Ascending aorta (tissue), 2 donors: ENCODE measurements at regions of chr3 and their contacts with region 1.

Region 1: DNA sequence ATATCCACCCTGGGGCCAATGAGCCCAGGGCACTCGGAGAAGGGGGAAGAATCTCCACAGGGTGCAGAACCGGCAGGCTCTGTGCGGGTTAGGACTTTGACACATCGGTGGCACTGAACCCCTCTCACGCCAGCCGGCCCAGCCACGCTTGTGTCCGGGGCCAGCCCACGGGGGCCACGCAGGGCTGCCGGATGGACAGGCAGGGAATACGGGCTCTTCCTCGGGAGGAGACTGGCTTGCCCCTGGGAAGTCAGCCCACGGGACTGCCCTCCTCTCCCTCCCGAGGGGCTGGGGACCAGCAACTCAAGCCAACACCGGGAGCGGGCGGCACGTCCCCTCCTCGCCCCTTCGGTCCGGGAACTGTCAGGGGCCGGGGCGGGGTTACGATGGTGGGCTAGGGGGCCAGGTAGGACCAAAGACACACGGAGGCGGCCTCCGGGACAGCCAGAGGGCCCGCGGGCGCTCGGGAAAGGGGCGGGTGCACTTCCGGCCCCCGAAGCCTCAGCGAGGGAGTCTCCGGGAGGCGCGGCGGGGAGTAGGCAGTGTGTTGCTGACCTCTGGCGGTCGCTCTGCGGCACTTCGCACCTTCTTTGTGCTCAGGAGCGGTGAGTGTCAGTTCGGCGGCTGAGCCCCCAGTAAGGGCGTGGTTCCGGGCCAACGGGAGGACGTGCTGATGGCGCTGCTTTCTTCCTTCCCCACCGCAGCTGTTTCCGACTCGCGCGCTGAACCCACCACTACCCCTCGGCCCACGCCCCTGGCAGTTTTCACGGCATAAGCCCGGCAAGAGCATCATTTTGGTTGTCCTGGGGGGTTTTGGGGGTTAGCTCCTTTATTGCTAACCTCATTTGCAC is 5.1 kb upstream of the CYP8B1 start:
- DNase-seq: peak; percentile 25 to 92
- H3K4me3 ChIP-seq: peak overlapping the region; percentile 69 to 70
- H3K27ac ChIP-seq: peak overlapping the region; percentile 64 to 75
- H3K4me1 ChIP-seq: peaks cover 0 to 4% of the 10 kb centered on the region in 2 donors
- H3K27me3 ChIP-seq: no peaks in the 10 kb centered on the region
- CTCF ChIP-seq: peak; percentile 88 to 97 (median 95)

Region 2: DNA sequence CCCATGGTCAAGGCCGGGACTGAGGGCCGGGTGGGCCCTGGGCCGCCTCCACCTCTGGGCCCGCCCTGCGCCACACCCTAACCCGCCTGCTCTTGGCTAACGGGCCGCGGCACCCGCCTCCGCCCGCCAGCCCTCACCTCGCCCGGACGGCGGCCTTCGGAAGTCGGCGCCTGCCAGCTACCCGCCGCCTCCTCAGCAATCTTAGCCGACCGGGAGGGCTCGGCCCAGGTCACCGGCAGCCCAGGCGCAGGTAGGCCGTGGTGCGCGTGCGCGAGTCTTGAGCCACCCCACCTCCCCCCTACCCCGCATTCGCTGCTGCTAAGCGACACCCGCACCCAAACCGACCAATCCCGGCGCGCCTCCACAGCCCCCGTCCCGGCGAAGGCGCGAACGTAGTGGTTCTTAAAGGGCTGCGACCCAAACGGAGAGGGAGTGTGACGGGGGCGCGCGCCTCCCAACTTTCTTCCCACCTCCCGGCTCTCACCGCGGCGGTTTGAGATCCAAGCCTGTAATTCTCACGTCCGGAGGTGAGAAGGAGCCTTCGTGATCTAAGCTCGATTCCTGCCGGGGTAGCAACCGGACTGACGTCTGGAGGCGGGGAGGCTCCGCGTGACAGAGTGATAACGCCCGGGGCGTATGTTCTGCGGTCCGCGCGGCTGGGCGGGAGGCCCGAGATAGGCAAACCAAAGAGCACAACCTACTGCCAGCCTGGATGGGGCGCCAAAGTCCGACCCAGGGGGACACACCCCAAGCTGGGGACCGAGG is 298.9 kb before region 1 on chr3 and contains the start of gene SEC22C:
- intact Hi-C with region 1: loop called (anchors 10 kb)
- DNase-seq: peak; percentile 84 to 98
- H3K4me3 ChIP-seq: peak within 1 kb of the TSS; percentile 86 to 96
- H3K27ac ChIP-seq: peak within 1 kb of the TSS; percentile 84 to 90
- H3K4me1 ChIP-seq: peaks cover 0 to 16% of the 10 kb centered on the region in 2 donors
- H3K27me3 ChIP-seq: no peaks in the 10 kb centered on the region
- CTCF ChIP-seq: peak in 2 of 3 experiments; percentile 16 to 49
- total RNA-seq, gene SEC22C: 28.3 TPM

Region 3: GRCh38 chr3:42780892-42781700 is 99.7 kb before region 1 on chr3:
- intact Hi-C with region 1: loop called (anchors 1 kb)
- DNase-seq: no peak
- H3K4me3 ChIP-seq: no peak overlapping the region
- H3K27ac ChIP-seq: peak overlapping the region in 1 of 2 donors; percentile 72
- H3K4me1 ChIP-seq: peaks cover 3 to 13% of the 10 kb centered on the region in 2 donors
- H3K27me3 ChIP-seq: no peaks in the 10 kb centered on the region
- CTCF ChIP-seq: peak; percentile 61 to 80 (median 80)

Region 4: GRCh38 chr3:42831321-42831713 is 49.5 kb before region 1 on chr3:
- intact Hi-C with region 1: loop called (anchors 1 kb)
- DNase-seq: peak; percentile 18 to 89
- H3K4me3 ChIP-seq: no peak overlapping the region
- H3K27ac ChIP-seq: no peak overlapping the region
- H3K4me1 ChIP-seq: peaks cover 0 to 3% of the 10 kb centered on the region in 2 donors
- H3K27me3 ChIP-seq: no peaks in the 10 kb centered on the region
- CTCF ChIP-seq: peak; percentile 63 to 80 (median 74)

Region 5: GRCh38 chr3:42839616-42840015 is 41.2 kb before region 1 on chr3:
- intact Hi-C with region 1: loop called (anchors 2 kb)
- DNase-seq: no peak
- H3K4me3 ChIP-seq: peak overlapping the region; percentile 25 to 35
- H3K27ac ChIP-seq: peak overlapping the region in 1 of 2 donors; percentile 12
- H3K4me1 ChIP-seq: peaks cover 2 to 22% of the 10 kb centered on the region in 2 donors
- H3K27me3 ChIP-seq: no peaks in the 10 kb centered on the region
- CTCF ChIP-seq: peak; percentile 76 to 83 (median 78)